ENCODE measurements at regions of chr21 and their contacts with region 1.

Region 1: GRCh38 chr21:45140346-45140940 is 66.1 kb downstream of the ADARB1 start:
- DNase-seq: peak; percentile 88
- ATAC-seq: peak; percentile 96
- H3K4me3 Mint-ChIP-seq: no peak overlapping the region
- H3K27ac Mint-ChIP-seq: no peak overlapping the region
- H3K4me1 Mint-ChIP-seq: peaks cover 7% of the 10 kb centered on the region
- H3K27me3 Mint-ChIP-seq: no peaks in the 10 kb centered on the region

Region 2: GRCh38 chr21:44773287-44773966 is 367.0 kb before region 1 on chr21:
- CTCF ChIA-PET with region 1: no interaction called
- DNase-seq: no peak
- ATAC-seq: no peak
- H3K4me3 Mint-ChIP-seq: no peak overlapping the region
- H3K27ac Mint-ChIP-seq: no peak overlapping the region
- H3K4me1 Mint-ChIP-seq: no peaks in the 10 kb centered on the region
- H3K27me3 Mint-ChIP-seq: no peaks in the 10 kb centered on the region

Region 3: GRCh38 chr21:44939532-44940115 is 200.8 kb before region 1 on chr21 and contains the start of gene SLX9:
- CTCF ChIA-PET with region 1: interaction called, 275 read pairs
- DNase-seq: peak; percentile 82
- ATAC-seq: peak; percentile 92
- H3K4me3 Mint-ChIP-seq: peak within 1 kb of the TSS; percentile 85
- H3K27ac Mint-ChIP-seq: peak within 1 kb of the TSS; percentile 83
- H3K4me1 Mint-ChIP-seq: peaks cover 46% of the 10 kb centered on the region
- H3K27me3 Mint-ChIP-seq: no peaks in the 10 kb centered on the region
- total RNA-seq, gene SLX9: 56.8 to 62.9 TPM

Region 4: GRCh38 chr21:45067462-45068285 is 72.8 kb before region 1 on chr21:
- CTCF ChIA-PET with region 1: interaction called, 14 read pairs
- DNase-seq: peak; percentile 34
- ATAC-seq: no peak
- H3K4me3 Mint-ChIP-seq: no peak overlapping the region
- H3K27ac Mint-ChIP-seq: no peak overlapping the region
- H3K4me1 Mint-ChIP-seq: no peaks in the 10 kb centered on the region
- H3K27me3 Mint-ChIP-seq: peaks cover 12% of the 10 kb centered on the region

Region 5: GRCh38 chr21:45109831-45110492 is 30.5 kb before region 1 on chr21:
- CTCF ChIA-PET with region 1: interaction called, 17 read pairs
- DNase-seq: peak; percentile 74
- ATAC-seq: peak; percentile 80
- H3K4me3 Mint-ChIP-seq: peak overlapping the region; percentile 62
- H3K27ac Mint-ChIP-seq: peak overlapping the region; percentile 58
- H3K4me1 Mint-ChIP-seq: peaks cover 48% of the 10 kb centered on the region
- H3K27me3 Mint-ChIP-seq: no peaks in the 10 kb centered on the region

Region 6: DNA sequence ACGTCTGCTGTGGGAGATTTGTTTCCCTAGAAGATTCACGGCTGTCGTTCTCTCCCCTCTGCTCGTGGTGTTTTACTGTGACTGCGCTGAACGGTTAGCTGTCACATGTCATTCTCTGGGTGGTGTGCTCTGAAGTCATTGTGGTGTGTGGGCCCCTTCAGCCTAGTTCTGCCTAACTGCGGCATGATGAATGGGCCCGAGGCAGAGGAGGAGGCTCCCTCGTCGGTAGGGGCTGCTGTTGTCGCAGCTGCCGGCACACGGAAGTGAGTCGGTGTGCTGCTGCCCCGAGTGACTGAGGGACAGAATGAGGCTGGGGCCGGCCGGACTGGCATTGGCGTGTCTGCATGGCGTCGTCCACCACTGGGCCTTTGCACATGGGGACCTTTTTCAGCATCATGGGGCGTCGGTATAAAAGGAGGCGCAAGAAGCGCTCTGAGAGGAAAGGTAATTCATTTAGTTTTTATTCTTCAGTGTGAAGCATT is 11.9 kb after region 1 on chr21:
- CTCF ChIA-PET with region 1: interaction called, 40 read pairs
- DNase-seq: peak; percentile 92
- ATAC-seq: peak; percentile 97
- H3K4me3 Mint-ChIP-seq: peak overlapping the region; percentile 75
- H3K27ac Mint-ChIP-seq: peak overlapping the region; percentile 88
- H3K4me1 Mint-ChIP-seq: peaks cover 44% of the 10 kb centered on the region
- H3K27me3 Mint-ChIP-seq: no peaks in the 10 kb centered on the region

Region 7: GRCh38 chr21:45287438-45288391 is 147.3 kb after region 1 on chr21 and contains the start of gene POFUT2:
- CTCF ChIA-PET with region 1: interaction called, 18 read pairs
- DNase-seq: peak; percentile 98
- ATAC-seq: peak; percentile 89
- H3K4me3 Mint-ChIP-seq: peak within 1 kb of the TSS; percentile 71
- H3K27ac Mint-ChIP-seq: peak within 1 kb of the TSS; percentile 64
- H3K4me1 Mint-ChIP-seq: peaks cover 16% of the 10 kb centered on the region
- H3K27me3 Mint-ChIP-seq: peaks cover 2% of the 10 kb centered on the region
- total RNA-seq, gene POFUT2: 16.4 to 19.5 TPM

Measured in activated CD8-positive, alpha-beta memory T cell treated with anti-CD3 and anti-CD28 coated beads, Interleukin-2, amount 10 ng/mL, durations not matched to agents 7 days and 5 days (primary cell).